ENCODE measurements at regions of chr2 and their contacts with region 1.

Region 1: DNA sequence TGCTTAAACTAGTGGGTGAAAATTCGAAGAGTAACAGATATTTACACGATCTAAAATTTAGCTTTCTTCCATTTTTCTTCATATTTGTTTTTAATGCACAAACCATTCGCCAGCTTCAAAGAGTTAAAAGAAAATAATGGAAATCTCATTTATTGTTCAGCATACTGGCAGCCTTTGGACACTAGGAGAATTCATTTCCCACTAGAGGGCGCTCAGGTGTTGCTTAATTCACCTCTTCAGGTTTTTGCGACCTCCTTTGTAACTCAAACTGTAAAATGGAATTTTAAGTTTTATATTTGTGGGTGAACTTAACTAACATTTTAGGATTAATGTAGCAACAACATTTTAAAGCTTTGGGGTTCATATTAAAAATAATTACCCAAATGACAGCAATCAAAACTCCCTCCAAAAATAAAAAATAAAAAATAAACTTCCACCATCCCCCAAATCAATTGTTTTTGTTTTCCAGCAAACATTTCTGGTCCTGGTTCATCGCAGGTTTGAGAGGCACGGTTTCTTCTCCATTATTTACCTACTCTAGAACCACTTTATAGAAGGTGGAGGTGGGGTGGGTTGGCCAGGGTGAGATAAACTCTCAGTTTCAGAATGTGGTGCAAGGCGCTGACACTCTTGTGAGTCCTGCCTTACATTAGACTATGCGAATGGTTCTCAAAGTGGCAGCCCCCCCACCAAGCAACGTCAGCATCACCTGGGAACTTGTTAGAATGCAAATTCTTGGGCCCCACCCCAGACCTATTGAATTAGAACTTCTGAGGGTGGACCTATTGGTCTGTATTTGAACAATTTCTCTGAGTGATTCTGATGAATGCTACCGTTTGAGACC is 24.7 kb upstream of the PNPT1 start:
- DNase-seq: peak; percentile 51 to 75 (median 69)
- H3K4me3 ChIP-seq: no peak overlapping the region
- H3K27ac ChIP-seq: no peak overlapping the region
- H3K4me1 ChIP-seq: no peaks in the 10 kb centered on the region
- H3K27me3 ChIP-seq: peaks cover 0 to 3% (median 0%) of the 10 kb centered on the region in 5 experiments

Region 2: GRCh38 chr2:55653251-55653650 is 65.1 kb before region 1 on chr2:
- CTCF ChIA-PET with region 1: no interaction called
- POLR2A ChIA-PET with region 1: no interaction called
- DNase-seq: no peak
- H3K4me3 ChIP-seq: no peak overlapping the region
- H3K27ac ChIP-seq: no peak overlapping the region
- H3K4me1 ChIP-seq: no peaks in the 10 kb centered on the region
- H3K27me3 ChIP-seq: no peaks in the 10 kb centered on the region

Region 3: GRCh38 chr2:55732854-55733253 is 14.5 kb after region 1 on chr2:
- CTCF ChIA-PET with region 1: interaction called, 11 read pairs
- POLR2A ChIA-PET with region 1: no interaction called
- DNase-seq: no peak
- H3K4me3 ChIP-seq: no peak overlapping the region
- H3K27ac ChIP-seq: no peak overlapping the region
- H3K4me1 ChIP-seq: no peaks in the 10 kb centered on the region
- H3K27me3 ChIP-seq: no peaks in the 10 kb centered on the region

Region 4: DNA sequence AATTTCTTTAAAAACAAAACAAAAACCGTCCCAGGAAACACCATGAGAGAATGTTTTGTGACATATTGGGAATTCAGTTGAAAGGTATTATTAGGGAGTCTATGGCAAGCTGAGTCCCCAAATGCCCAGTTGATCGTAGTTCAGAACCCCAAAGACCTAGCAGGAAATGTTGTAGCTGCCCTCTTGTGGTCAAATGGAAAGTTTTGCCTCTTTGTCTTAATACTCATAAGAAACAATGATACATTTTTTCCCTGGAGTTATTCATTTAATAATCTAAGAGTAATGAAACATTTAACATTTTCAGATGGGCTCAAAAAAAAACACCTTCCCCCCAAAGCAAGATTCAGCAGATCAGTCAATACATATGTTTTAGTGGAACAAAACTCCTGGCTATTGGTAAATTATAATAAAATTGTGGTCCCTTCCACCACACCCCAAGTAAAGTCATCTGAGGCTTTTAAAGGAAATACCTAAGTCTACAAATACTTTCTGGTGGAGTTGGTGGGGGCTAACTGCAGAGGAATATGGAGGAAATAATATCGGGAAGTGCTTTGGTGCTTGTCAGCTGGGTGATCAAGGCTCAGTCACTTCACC is 243.0 kb after region 1 on chr2:
- CTCF ChIA-PET with region 1: interaction called, 14 read pairs
- POLR2A ChIA-PET with region 1: no interaction called
- DNase-seq: peak; percentile 22 to 58 (median 55)
- H3K4me3 ChIP-seq: no peak overlapping the region
- H3K27ac ChIP-seq: no peak overlapping the region
- H3K4me1 ChIP-seq: peaks cover 0 to 5% (median 2%) of the 10 kb centered on the region in 4 experiments
- H3K27me3 ChIP-seq: peaks cover 0 to 5% (median 0%) of the 10 kb centered on the region in 5 experiments

Measured in common myeloid progenitor, CD34-positive (primary cell).